Activated CD8-positive, alpha-beta T cell treated with anti-CD3 and anti-CD28 coated beads for 36 hours (primary cell): ENCODE measurements at regions of chr15 and their contacts with region 1.

Region 1: GRCh38 chr15:51776952-51777574 is 25.7 kb downstream of the TMOD2 start:
- DNase-seq: peak; percentile 77
- ATAC-seq: peak; percentile 77
- H3K4me3 Mint-ChIP-seq: no peak overlapping the region
- H3K27ac Mint-ChIP-seq: no peak overlapping the region
- H3K4me1 Mint-ChIP-seq: peaks cover 6% of the 10 kb centered on the region
- H3K27me3 Mint-ChIP-seq: no peaks in the 10 kb centered on the region
- CTCF ChIP-seq: peak; percentile 64

Region 2: GRCh38 chr15:51550841-51551240 is 226.2 kb before region 1 on chr15:
- CTCF ChIA-PET with region 1: no interaction called
- POLR2A ChIA-PET with region 1: no interaction called
- intact Hi-C with region 1: no loop called
- DNase-seq: no peak
- ATAC-seq: no peak
- H3K4me3 Mint-ChIP-seq: no peak overlapping the region
- H3K27ac Mint-ChIP-seq: no peak overlapping the region
- H3K4me1 Mint-ChIP-seq: no peaks in the 10 kb centered on the region
- H3K27me3 Mint-ChIP-seq: no peaks in the 10 kb centered on the region
- CTCF ChIP-seq: no peak

Region 3: GRCh38 chr15:51629612-51630011 is 147.5 kb before region 1 on chr15:
- CTCF ChIA-PET with region 1: interaction called, 10 read pairs
- POLR2A ChIA-PET with region 1: interaction called, 3 read pairs
- intact Hi-C with region 1: no loop called
- DNase-seq: no peak
- ATAC-seq: no peak
- H3K4me3 Mint-ChIP-seq: no peak overlapping the region
- H3K27ac Mint-ChIP-seq: no peak overlapping the region
- H3K4me1 Mint-ChIP-seq: peaks cover 4% of the 10 kb centered on the region
- H3K27me3 Mint-ChIP-seq: peaks cover 7% of the 10 kb centered on the region
- CTCF ChIP-seq: no peak

Region 4: DNA sequence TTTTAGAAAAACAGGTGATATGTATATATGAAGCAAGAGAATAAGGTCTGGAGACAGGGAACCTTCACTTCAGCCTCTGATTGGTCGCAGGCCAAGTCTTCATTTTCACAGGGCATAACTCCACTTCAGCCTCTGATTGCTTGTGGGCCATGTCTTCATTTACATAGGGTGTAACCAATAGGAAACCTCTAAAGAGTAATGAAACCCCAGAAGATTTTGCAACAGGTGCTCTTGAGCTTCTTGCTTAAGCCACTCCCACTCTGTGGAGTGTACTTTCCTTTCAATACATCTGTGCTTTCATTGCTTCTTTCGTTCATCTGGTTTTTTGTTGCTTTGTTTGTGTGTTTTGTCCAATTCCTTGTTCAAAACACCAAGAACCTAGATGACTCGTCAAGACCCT is 118.4 kb before region 1 on chr15:
- CTCF ChIA-PET with region 1: interaction called, 59 read pairs
- POLR2A ChIA-PET with region 1: no interaction called
- intact Hi-C with region 1: no loop called
- DNase-seq: no peak
- ATAC-seq: no peak
- H3K4me3 Mint-ChIP-seq: no peak overlapping the region
- H3K27ac Mint-ChIP-seq: no peak overlapping the region
- H3K4me1 Mint-ChIP-seq: no peaks in the 10 kb centered on the region
- H3K27me3 Mint-ChIP-seq: peaks cover 2% of the 10 kb centered on the region
- CTCF ChIP-seq: no peak

Region 5: DNA sequence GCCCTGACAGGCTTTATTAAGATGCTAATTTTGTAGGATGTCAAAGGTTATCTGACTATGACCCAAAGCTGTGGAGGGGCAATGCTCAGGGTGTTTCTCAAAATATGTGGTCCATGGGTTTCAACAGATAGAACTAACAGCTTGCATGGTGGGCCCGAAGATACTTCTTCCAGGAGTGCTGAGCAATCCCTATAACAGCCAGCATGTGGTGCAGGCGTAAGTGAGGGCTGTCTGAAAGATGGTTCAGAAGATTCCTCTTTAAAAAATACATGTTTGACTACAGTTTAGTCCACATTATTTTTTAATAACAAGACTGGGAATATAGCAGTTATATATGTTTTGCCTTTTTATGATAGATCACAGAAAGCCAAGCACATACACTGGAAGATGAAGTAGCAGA is 88.2 kb before region 1 on chr15:
- CTCF ChIA-PET with region 1: interaction called, 16 read pairs
- POLR2A ChIA-PET with region 1: no interaction called
- intact Hi-C with region 1: no loop called
- DNase-seq: no peak
- ATAC-seq: no peak
- H3K4me3 Mint-ChIP-seq: no peak overlapping the region
- H3K27ac Mint-ChIP-seq: no peak overlapping the region
- H3K4me1 Mint-ChIP-seq: peaks cover 10% of the 10 kb centered on the region
- H3K27me3 Mint-ChIP-seq: peaks cover 22% of the 10 kb centered on the region
- CTCF ChIP-seq: no peak

Region 6: GRCh38 chr15:51759557-51760070 is 17.4 kb before region 1 on chr15:
- CTCF ChIA-PET with region 1: interaction called, 47 read pairs
- POLR2A ChIA-PET with region 1: no interaction called
- intact Hi-C with region 1: no loop called
- DNase-seq: no peak
- ATAC-seq: no peak
- H3K4me3 Mint-ChIP-seq: no peak overlapping the region
- H3K27ac Mint-ChIP-seq: no peak overlapping the region
- H3K4me1 Mint-ChIP-seq: peaks cover 2% of the 10 kb centered on the region
- H3K27me3 Mint-ChIP-seq: no peaks in the 10 kb centered on the region
- CTCF ChIP-seq: no peak